Activated CD4-positive, alpha-beta T cell treated with anti-CD3 and anti-CD28 coated beads, Interleukin-2, amount 10 ng/mL, durations not matched to agents 24 days and 14 days (primary cell): ENCODE measurements at regions of chr2 and their contacts with region 1.

Region 1: DNA sequence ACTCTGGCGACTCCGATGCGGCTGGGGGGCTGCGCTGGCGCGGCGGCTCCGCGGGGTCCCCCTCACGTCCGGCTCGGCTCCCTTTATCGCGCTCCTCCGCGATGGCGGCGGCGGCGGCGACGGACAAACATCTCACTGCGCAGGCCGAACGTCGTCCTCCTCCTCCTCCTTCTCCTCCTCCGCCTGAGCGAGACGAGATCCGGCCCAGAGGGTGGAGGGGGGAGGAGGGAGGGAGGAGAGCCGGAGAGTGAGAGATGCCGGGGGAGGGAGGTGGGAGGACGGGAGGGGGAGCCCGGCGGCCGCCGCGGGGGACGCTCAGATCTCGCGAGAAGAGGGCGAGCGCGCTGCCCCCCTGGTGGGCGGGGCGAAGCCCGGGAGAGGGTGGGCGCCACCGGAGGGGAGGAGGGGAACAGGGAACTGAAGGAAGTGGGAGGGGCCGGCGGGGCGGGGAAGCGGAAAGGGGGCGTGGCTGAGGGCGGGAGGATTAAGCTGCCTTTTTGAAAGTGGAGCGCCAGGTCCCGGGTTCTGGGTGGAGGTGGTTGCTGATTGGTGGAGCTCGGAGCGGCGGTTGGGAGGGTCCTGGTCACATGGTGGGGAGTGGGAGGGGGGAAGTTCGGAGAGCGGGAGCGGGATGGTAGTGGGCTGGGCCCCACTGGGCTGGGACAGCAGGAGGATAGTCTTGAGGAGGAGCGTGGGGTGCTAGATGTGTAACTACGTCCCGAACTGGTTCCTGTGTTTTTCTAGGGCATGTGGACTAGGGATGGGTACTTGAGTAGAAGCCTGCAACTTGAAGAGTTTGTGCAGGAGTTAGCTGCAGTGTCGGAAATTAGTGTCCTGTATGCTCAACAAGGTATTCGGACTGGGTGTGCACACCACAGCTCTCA is at the start of gene CUL3:
- DNase-seq: peak; percentile 100
- H3K4me3 Mint-ChIP-seq: peak within 1 kb of the TSS; percentile 98
- H3K27ac Mint-ChIP-seq: peak within 1 kb of the TSS; percentile 95
- H3K4me1 Mint-ChIP-seq: peaks cover 28% of the 10 kb centered on the region
- H3K27me3 Mint-ChIP-seq: no peaks in the 10 kb centered on the region
- total RNA-seq, gene CUL3: 92.6 and 97.3 TPM in 2 replicates

Region 2: DNA sequence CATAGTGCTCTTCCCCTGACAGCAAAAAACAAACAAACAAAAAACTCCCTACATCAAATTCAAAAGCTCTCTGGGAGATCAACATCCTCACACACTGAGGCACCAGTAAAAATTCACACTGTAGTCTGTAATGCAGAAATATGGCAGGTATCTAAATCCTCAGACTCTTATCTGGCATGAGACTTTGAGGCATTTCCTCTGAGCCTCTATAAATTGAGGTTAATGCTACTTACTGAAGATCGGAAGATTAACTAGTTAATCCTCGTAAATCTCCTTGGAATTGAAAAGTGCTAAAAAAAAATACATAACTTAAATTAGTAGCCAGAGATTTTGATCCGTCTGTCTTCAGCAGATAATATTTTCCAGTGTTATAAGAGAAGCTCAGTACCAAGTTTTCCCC is 813.1 kb before region 1 on chr2:
- intact Hi-C with region 1: no loop called
- DNase-seq: no peak
- H3K4me3 Mint-ChIP-seq: no peak overlapping the region
- H3K27ac Mint-ChIP-seq: no peak overlapping the region
- H3K4me1 Mint-ChIP-seq: peaks cover 7% of the 10 kb centered on the region
- H3K27me3 Mint-ChIP-seq: no peaks in the 10 kb centered on the region

Region 3: DNA sequence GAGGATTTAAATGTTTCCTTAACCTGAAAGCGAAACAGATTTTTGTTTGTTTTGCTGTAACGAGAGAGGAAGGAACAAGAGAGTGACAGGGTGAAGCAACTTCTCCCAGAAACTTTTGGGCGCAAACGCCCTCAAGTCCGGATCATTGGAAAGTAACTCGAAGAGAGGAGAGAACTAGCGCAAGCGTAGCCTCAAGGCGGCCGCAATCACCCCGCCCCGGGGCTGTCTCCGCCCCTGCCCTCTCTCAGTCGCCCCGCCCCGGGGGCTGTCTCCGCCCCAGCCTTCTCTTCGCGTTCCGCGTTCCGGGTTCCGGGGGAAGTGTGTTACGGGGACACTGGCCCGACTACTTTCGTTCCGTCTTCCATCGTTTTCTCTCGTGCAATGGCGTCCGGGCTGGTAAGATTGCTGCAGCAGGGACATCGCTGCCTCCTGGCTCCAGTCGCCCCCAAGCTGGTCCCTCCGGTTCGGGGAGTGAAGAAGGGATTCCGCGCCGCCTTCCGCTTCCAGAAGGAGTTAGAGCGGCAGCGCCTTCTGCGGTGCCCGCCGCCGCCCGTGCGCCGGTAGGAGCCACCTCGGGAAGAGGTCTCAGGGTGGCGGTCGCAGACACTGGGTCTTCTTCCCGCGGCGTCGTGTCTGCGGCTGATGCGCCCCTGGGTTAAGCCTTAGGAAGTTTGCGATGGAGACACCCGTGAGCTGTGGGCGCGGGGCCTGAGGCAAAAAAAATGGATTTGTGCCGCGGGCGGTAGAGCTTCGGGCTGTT is 628.2 kb before region 1 on chr2 and contains the start of gene MRPL44:
- intact Hi-C with region 1: loop called (anchors 5 kb)
- DNase-seq: peak; percentile 100
- H3K4me3 Mint-ChIP-seq: peak within 1 kb of the TSS; percentile 95
- H3K27ac Mint-ChIP-seq: peak within 1 kb of the TSS; percentile 95
- H3K4me1 Mint-ChIP-seq: peaks cover 62% of the 10 kb centered on the region
- H3K27me3 Mint-ChIP-seq: no peaks in the 10 kb centered on the region
- total RNA-seq, gene MRPL44: 37.3 and 37.4 TPM in 2 replicates

Region 4: DNA sequence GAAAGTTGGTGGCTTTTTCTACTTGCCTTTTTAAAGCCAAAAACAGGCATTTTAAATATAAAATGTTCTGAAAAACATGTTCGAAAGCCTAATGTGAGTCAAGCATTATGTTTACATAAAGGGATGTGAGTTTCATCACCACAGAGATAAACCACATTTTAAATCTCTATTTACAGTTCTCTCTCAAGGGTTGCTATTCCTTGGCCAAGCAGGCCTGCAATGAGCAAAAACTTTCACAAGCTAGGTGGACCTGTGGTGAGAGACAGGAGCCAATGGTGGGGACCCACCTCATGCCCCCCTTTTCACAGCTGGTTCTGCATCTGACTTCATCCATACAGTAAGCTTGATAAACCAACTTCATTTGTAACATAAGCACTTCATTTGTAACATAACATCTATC is 65.4 kb before region 1 on chr2:
- intact Hi-C with region 1: loop called (anchors 1 kb)
- DNase-seq: peak; percentile 74
- H3K4me3 Mint-ChIP-seq: no peak overlapping the region
- H3K27ac Mint-ChIP-seq: peak overlapping the region; percentile 50
- H3K4me1 Mint-ChIP-seq: peaks cover 45% of the 10 kb centered on the region
- H3K27me3 Mint-ChIP-seq: no peaks in the 10 kb centered on the region

Region 5: DNA sequence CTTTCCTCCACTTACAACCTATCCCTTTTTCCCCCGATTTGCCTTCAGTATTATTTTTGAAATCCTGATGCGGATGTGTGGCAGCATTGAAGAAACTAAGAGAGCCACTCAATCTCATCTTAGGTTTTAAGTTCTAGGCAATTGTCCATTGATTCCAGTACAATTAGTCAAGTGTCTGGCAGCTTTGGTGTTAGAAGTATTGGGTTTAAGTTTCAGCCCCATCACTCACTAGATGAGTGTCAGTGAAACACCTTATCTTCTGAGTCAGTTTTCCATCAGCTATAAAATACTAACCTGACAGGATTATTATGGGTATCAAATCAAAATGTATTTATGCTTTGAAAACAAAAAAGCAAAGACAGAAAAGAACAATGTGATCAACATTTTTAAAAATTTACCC is 16.5 kb after region 1 on chr2:
- intact Hi-C with region 1: loop called (anchors 2 kb)
- DNase-seq: no peak
- H3K4me3 Mint-ChIP-seq: no peak overlapping the region
- H3K27ac Mint-ChIP-seq: no peak overlapping the region
- H3K4me1 Mint-ChIP-seq: peaks cover 8% of the 10 kb centered on the region
- H3K27me3 Mint-ChIP-seq: peaks cover 11% of the 10 kb centered on the region

Region 6: DNA sequence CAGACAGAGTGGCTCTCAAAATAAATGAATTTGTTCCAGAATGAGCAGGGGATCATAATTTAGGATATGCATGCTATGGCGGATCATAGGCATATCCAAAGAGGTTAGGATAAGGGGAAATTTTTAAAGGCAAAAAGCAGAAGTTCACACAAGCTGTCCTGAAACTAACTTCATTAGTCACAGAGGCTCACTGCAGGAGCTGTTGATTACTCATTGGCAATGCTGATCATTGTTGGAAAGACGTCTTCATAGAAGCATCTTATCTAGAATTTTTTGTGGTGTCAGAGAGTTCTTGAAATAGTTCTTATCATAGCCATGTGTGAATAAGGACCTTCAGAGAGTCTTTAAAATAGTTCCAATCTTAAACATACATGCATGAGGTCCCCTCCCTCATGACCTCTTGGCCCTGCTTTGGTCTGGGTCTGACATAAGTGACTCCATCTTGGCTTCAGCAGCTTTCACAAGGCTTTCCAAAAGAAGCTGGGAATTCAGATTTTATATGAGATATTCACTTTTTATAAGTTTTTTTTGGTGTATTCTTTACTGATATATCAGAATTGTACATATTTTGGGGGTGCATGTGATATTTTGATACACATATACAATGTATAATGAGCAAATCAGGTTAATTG is 138.3 kb after region 1 on chr2:
- intact Hi-C with region 1: no loop called
- DNase-seq: no peak
- H3K4me3 Mint-ChIP-seq: no peak overlapping the region
- H3K27ac Mint-ChIP-seq: no peak overlapping the region
- H3K4me1 Mint-ChIP-seq: no peaks in the 10 kb centered on the region
- H3K27me3 Mint-ChIP-seq: peaks cover 5% of the 10 kb centered on the region

Region 7: GRCh38 chr2:224837558-224837957 is 252.1 kb after region 1 on chr2:
- intact Hi-C with region 1: no loop called
- DNase-seq: no peak
- H3K4me3 Mint-ChIP-seq: no peak overlapping the region
- H3K27ac Mint-ChIP-seq: no peak overlapping the region
- H3K4me1 Mint-ChIP-seq: peaks cover 2% of the 10 kb centered on the region
- H3K27me3 Mint-ChIP-seq: no peaks in the 10 kb centered on the region

Region 8: DNA sequence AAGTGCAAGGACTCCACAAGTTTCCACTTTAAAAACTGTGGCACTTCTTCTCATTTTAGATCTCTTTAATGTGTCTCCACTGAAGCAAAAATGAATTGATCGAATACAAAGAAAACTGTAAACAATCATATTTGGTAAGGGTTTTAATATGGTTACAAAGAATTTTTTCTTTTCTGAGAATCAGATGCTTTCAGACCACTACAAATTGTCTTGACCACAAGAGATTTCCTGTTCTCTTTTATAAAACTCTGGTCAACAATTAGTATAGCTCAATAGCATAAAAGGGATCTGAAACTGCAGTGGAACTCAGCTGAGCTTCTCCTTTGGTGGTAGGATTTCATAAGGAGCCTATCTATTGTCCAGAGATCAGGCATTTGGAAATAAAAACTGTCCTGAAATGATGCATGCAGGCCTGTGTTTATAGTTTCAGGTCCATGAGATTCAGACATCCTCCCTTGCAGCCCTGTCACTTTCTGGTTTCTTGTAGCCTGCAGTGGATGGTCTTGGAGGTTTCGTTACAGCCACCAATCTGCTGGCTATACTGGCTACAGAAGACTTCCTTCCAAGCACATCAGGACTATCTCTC is 336.8 kb after region 1 on chr2:
- intact Hi-C with region 1: loop called (anchors 10 kb)
- DNase-seq: peak; percentile 64
- H3K4me3 Mint-ChIP-seq: peak overlapping the region; percentile 12
- H3K27ac Mint-ChIP-seq: peak overlapping the region; percentile 79
- H3K4me1 Mint-ChIP-seq: peaks cover 46% of the 10 kb centered on the region
- H3K27me3 Mint-ChIP-seq: no peaks in the 10 kb centered on the region